ENCODE measurements at regions of chr13 and their contacts with region 1.

Region 1: GRCh38 chr13:23074075-23074828 is 106.5 kb upstream of the SGCG start:
- DNase-seq: no peak
- CTCF ChIP-seq: no peak

Region 2: GRCh38 chr13:23087880-23088279 is 13.6 kb after region 1 on chr13:
- CTCF ChIA-PET with region 1: interaction called, 15 read pairs
- POLR2A ChIA-PET with region 1: no interaction called
- DNase-seq: peak; percentile 48
- CTCF ChIP-seq: peak; percentile 46

Region 3: GRCh38 chr13:23690668-23691067 is 616.4 kb after region 1 on chr13:
- CTCF ChIA-PET with region 1: no interaction called
- POLR2A ChIA-PET with region 1: no interaction called
- DNase-seq: no peak
- CTCF ChIP-seq: no peak